MCF 10A (cell line): ENCODE measurements at regions of chr1 and their contacts with region 1.

Region 1: GRCh38 chr1:210400043-210400840 is 71.5 kb downstream of the HHAT start:
- DNase-seq: peak; percentile 88
- H3K4me3 Mint-ChIP-seq: no peak overlapping the region
- H3K27ac Mint-ChIP-seq: no peak overlapping the region
- H3K4me1 Mint-ChIP-seq: peaks cover 7% of the 10 kb centered on the region
- H3K27me3 Mint-ChIP-seq: no peaks in the 10 kb centered on the region
- CTCF ChIP-seq: peak; percentile 98

Region 2: GRCh38 chr1:210200124-210200736 is 200.0 kb before region 1 on chr1:
- CTCF ChIA-PET with region 1: interaction called, 5 read pairs
- POLR2A ChIA-PET with region 1: no interaction called
- intact Hi-C with region 1: loop called (anchors 1 kb)
- DNase-seq: peak; percentile 28
- H3K4me3 Mint-ChIP-seq: no peak overlapping the region
- H3K27ac Mint-ChIP-seq: no peak overlapping the region
- H3K4me1 Mint-ChIP-seq: peaks cover 6% of the 10 kb centered on the region
- H3K27me3 Mint-ChIP-seq: peaks cover 6% of the 10 kb centered on the region
- CTCF ChIP-seq: peak; percentile 26

Region 3: GRCh38 chr1:210328746-210329503 is 71.3 kb before region 1 on chr1 and contains the start of gene HHAT:
- CTCF ChIA-PET with region 1: interaction called, 26 read pairs
- POLR2A ChIA-PET with region 1: interaction called, 6 read pairs
- intact Hi-C with region 1: no loop called
- DNase-seq: peak; percentile 95
- H3K4me3 Mint-ChIP-seq: peak within 1 kb of the TSS; percentile 81
- H3K27ac Mint-ChIP-seq: peak within 1 kb of the TSS; percentile 87
- H3K4me1 Mint-ChIP-seq: peaks cover 26% of the 10 kb centered on the region
- H3K27me3 Mint-ChIP-seq: no peaks in the 10 kb centered on the region
- CTCF ChIP-seq: no peak
- total RNA-seq, gene HHAT: 4.6 and 4.9 TPM in 2 replicates

Region 4: GRCh38 chr1:210360852-210361477 is 39.3 kb before region 1 on chr1:
- CTCF ChIA-PET with region 1: interaction called, 807 read pairs
- POLR2A ChIA-PET with region 1: interaction called, 6 read pairs
- intact Hi-C with region 1: loop called (anchors 1 kb)
- DNase-seq: peak; percentile 76
- H3K4me3 Mint-ChIP-seq: no peak overlapping the region
- H3K27ac Mint-ChIP-seq: no peak overlapping the region
- H3K4me1 Mint-ChIP-seq: peaks cover 18% of the 10 kb centered on the region
- H3K27me3 Mint-ChIP-seq: no peaks in the 10 kb centered on the region
- CTCF ChIP-seq: peak; percentile 83

Region 5: DNA sequence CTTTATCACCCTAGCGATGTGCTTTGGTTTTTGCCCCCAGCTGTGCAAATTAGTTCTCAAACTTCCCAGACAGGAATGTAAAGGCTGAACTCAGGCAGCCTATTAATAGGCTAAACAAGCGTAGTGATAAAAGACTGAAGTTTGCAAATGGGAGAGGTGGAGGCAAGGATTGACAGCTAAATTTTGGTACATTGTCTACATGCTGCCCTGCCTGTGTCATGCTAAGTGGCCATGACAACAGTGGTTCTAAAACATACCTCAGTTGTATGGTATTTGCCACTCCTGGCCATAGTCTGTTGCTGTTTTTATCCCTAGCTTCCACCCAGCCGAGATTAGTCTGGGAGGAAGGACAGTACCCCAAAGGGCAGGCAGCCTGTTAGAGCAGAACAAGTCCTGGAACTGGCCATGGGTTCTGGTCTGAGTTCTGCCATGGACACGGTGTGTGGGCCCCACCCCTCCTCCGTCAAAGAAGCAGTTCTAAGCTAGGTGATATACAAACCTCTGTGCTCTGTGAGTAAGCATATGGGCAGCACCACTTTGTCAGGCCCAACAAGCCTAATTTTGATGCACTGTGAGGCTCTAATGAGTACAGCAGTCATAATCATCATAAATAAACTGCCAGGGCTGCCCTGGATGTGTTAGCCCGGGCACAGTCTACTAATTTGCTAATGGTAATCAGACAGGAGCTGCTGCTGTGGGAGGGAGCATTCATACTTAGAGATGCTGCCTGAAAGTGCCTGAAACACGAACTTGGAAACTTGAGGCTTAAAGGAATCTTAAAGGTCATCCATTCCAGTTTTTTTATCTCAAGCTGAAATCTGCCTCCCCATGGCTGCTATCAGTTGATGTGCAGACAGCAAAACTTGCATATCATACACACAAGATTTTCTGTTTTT is 105.6 kb after region 1 on chr1:
- CTCF ChIA-PET with region 1: no interaction called
- POLR2A ChIA-PET with region 1: no interaction called
- intact Hi-C with region 1: no loop called
- DNase-seq: no peak
- H3K4me3 Mint-ChIP-seq: no peak overlapping the region
- H3K27ac Mint-ChIP-seq: no peak overlapping the region
- H3K4me1 Mint-ChIP-seq: no peaks in the 10 kb centered on the region
- H3K27me3 Mint-ChIP-seq: no peaks in the 10 kb centered on the region
- CTCF ChIP-seq: no peak